GM10248 (cell line): ENCODE measurements at regions of chr19 and their contacts with region 1.

Region 1: DNA sequence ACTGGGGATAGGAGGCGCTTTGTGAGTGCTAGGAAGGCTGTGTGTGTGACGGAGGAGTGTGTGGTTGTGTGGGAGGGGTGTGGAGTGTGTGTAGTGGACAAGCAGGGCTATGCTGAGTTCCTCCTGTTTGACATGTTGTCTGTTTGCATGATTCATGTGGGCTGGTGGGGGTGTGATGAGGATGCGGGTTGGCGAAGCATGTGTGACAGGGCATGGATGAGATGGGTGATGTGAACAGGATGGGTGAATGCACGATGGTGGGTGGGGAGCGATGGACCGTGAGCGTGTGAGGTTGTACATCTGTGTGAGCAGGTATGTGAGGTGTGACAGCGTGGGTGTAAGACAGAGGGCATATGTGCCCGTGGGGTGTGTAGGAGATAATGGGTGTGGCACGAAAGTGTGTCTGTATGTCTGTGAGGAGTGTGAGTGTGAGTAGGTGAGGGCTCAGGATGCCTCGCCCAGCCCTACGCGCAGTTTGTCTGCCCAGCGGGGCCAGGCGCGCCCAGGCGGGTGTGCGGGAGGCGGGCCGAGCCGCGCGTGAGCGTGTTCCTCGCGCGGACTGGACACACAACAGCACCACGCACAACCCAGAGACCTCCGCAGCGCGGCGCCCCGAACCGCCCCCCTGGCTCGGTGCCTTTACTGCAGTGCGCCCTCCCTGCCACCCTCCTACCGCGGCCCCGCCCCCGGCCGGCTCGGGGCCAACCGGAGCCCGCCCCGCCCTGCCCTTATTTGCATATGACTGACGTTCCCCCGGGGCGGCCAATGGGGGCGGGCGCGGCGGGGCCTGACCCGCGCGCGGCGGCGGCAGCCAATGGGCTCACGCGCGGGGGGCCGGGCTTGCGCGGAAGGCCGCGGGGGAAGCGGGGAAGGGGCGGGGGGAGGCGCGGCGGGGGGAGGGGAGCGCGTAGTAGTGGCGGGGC is 14.4 kb downstream of the CIC start:
- DNase-seq: peak; percentile 95
- CTCF ChIP-seq: no peak

Region 2: GRCh38 chr19:41945135-41945766 is 338.2 kb before region 1 on chr19:
- CTCF ChIA-PET with region 1: no interaction called
- POLR2A ChIA-PET with region 1: no interaction called
- DNase-seq: peak; percentile 88
- CTCF ChIP-seq: no peak

Region 3: DNA sequence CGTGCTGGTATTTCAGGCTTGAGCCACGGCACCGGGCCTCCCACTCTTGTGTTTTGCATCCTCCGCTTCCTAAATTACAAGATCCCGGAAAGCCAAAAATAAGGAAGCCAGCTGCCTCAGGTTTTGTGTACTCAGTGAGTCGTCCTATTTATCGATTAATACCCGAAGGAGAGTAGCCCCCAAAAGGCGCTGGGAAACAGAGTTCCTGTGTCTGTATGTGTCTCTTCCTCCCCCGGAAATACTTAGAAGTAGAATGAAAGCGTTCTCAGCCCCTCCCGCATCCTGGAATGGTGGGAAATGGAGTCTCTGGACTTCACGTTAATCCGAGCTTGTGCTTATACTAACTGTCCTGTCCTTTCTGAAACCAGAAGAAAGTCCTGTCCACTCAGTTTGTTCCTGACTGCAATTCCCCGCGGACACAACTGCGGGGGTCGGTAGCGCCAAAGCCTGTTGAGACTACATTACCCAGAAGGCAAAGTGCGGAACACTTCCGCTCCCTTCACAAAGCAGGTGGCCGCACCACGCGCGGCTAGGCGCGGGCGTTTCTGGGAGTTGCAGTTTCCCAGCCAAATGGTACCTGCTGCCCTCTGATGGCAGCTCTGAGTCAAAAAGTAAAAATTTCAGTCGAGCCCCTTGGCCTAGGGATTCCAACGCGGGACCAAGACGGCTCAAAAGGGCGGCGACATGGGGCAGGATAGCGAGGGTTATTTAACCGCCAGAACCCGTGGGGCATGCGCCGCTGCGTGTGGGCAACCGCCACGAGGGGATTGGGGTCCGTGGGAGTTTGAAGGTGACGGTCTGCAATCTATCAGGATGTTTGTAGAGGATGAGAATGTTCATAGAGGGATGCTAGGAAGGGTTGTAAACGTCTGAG is 38.8 kb before region 1 on chr19:
- CTCF ChIA-PET with region 1: interaction called, 87 read pairs
- POLR2A ChIA-PET with region 1: interaction called, 8 read pairs
- DNase-seq: peak; percentile 86
- CTCF ChIP-seq: peak; percentile 69

Region 4: GRCh38 chr19:42268704-42269477 is 14.5 kb before region 1 on chr19 and contains the start of gene CIC:
- CTCF ChIA-PET with region 1: interaction called, 30 read pairs
- POLR2A ChIA-PET with region 1: interaction called, 8 read pairs
- DNase-seq: peak; percentile 95
- CTCF ChIP-seq: no peak

Region 5: DNA sequence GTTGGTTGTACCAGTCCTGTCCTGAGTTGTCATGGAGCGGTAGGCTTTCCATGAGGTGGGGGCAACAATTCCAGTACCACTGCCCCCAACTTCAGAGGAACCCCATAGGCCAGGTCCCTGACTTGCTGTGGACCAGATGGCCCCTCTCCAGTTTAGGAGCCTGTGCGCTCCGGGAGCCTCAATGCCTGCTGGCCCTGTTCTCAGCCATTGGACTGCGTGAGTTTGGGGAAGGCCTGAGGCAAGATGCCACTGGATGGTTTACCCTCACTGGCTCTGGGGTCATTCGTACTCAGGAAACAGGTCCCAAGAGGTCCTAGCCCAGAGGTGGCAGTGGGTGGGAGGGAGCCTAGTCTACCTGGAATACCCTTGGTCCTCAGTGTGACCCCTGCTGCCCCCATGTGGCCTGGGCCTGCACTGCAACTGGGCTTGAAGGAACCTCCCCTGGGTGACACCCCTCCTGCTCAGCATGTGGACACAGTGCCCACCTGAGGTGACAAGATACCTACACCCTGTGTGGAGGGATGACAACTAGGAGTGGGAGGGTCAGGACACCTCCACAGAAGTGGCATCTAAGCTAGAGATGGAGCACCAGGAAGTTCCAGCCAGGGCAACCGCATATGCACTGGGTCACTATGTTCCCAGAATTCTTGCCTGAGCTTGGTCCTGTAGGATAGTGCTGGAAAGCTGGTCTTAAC is 12.6 kb after region 1 on chr19:
- CTCF ChIA-PET with region 1: interaction called, 20 read pairs
- POLR2A ChIA-PET with region 1: no interaction called
- DNase-seq: peak; percentile 84
- CTCF ChIP-seq: peak; percentile 99